Endothelial cell of umbilical vein (primary cell): ENCODE measurements at regions of chr7 and their contacts with region 1.

Region 1: DNA sequence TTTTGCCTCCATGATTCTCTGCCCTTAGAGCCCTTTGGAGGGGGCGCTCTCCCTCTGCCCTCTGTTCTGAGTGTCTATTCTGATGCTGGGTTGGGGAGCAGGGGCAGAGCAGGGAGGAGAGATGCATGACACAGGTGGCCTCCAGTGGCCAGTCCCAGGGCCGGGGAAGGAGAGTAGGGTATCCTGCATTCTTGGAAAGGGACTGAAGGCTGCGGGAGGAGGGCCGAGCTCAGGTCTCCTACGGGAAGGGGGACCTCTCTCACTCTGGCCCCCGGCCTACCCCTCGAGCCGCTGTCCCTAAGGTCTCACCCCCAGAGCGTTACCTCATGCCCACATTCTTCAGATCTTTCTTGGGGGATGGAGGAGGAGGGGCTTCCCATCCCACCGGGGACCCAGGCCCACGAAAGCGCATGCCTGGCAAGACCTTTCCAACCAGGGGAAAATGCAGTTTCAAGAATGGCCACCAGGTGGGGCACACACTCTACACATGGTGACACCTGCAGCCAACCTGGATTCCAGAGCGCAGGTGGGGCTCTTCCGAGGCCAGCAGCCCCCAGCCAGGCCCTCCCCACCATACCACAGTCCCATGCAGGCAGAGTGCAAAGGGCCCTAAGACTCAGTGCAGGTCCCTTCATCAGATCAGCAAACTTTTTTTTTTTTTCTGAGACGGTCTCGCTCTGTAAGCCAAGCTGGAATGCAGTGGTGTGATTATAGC is 86.4 kb downstream of the MYL10 start:
- DNase-seq: peak; percentile 48
- H3K4me3 ChIP-seq: no peak overlapping the region
- H3K27ac ChIP-seq: no peak overlapping the region
- H3K4me1 ChIP-seq: no peaks in the 10 kb centered on the region
- H3K27me3 ChIP-seq: no peaks in the 10 kb centered on the region
- CTCF ChIP-seq: peak; percentile 58 to 84
- POLR2A ChIP-seq: no peak

Region 2: GRCh38 chr7:101553018-101553770 is 10.5 kb after region 1 on chr7:
- CTCF ChIA-PET with region 1: interaction called, 13 read pairs
- POLR2A ChIA-PET with region 1: no interaction called
- dilution Hi-C with region 1: no loop called
- intact Hi-C with region 1: no loop called
- DNase-seq: no peak
- H3K4me3 ChIP-seq: no peak overlapping the region
- H3K27ac ChIP-seq: no peak overlapping the region
- H3K4me1 ChIP-seq: no peaks in the 10 kb centered on the region
- H3K27me3 ChIP-seq: no peaks in the 10 kb centered on the region
- CTCF ChIP-seq: no peak
- POLR2A ChIP-seq: no peak

Region 3: GRCh38 chr7:101882595-101883564 is 340.2 kb after region 1 on chr7:
- CTCF ChIA-PET with region 1: no interaction called
- POLR2A ChIA-PET with region 1: no interaction called
- dilution Hi-C with region 1: no loop called
- intact Hi-C with region 1: no loop called
- DNase-seq: peak; percentile 98
- H3K4me3 ChIP-seq: peak overlapping the region in 1 of 3 experiments; percentile 1
- H3K27ac ChIP-seq: peak overlapping the region; percentile 93
- H3K4me1 ChIP-seq: peaks cover 35% of the 10 kb centered on the region
- H3K27me3 ChIP-seq: no peaks in the 10 kb centered on the region
- CTCF ChIP-seq: no peak
- POLR2A ChIP-seq: no peak

Region 4: GRCh38 chr7:102122026-102122425 is 579.3 kb after region 1 on chr7:
- CTCF ChIA-PET with region 1: no interaction called
- POLR2A ChIA-PET with region 1: no interaction called
- dilution Hi-C with region 1: no loop called
- intact Hi-C with region 1: no loop called
- DNase-seq: peak; percentile 46
- H3K4me3 ChIP-seq: no peak overlapping the region
- H3K27ac ChIP-seq: peak overlapping the region; percentile 9
- H3K4me1 ChIP-seq: peaks cover 11% of the 10 kb centered on the region
- H3K27me3 ChIP-seq: no peaks in the 10 kb centered on the region
- CTCF ChIP-seq: no peak
- POLR2A ChIP-seq: no peak

Region 5: DNA sequence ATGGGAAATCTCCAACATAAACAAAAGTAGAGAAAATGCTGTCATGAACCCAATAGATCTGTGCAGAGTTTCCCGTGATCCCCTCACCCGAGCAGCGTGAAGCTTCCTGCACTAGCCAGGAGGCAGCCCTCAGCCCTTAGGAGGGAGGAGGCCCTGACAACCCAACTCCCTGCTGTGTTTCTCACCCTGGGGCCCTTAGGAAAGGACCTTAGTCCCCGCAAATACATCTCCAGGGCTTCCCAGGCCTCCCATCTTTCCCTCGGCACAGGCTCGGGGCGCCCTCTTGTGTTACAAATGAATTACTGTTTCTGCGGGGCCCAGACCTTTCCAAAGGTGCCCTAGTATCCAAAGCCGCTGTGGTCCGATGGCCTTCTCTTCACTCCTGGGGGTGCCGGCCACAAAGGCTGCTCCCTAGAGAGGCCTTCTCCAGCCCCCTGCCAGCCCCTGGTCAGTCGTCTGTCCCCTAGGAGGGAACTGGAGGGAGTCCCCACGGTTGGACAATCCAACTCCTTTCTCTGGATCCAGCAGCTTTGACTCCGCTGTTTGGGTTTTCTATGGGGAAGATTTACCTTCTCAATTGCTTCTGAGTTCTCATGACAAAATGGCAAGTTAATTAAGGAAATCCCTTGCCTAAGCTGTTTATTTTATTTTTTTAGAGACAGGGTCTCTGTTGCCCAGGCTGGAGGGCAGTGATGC is 694.1 kb after region 1 on chr7:
- CTCF ChIA-PET with region 1: interaction called, 21 read pairs
- POLR2A ChIA-PET with region 1: no interaction called
- dilution Hi-C with region 1: no loop called
- intact Hi-C with region 1: loop called (anchors 1 kb)
- DNase-seq: peak; percentile 57
- H3K4me3 ChIP-seq: no peak overlapping the region
- H3K27ac ChIP-seq: no peak overlapping the region
- H3K4me1 ChIP-seq: no peaks in the 10 kb centered on the region
- H3K27me3 ChIP-seq: no peaks in the 10 kb centered on the region
- CTCF ChIP-seq: peak; percentile 69 to 79
- POLR2A ChIP-seq: no peak

Region 6: DNA sequence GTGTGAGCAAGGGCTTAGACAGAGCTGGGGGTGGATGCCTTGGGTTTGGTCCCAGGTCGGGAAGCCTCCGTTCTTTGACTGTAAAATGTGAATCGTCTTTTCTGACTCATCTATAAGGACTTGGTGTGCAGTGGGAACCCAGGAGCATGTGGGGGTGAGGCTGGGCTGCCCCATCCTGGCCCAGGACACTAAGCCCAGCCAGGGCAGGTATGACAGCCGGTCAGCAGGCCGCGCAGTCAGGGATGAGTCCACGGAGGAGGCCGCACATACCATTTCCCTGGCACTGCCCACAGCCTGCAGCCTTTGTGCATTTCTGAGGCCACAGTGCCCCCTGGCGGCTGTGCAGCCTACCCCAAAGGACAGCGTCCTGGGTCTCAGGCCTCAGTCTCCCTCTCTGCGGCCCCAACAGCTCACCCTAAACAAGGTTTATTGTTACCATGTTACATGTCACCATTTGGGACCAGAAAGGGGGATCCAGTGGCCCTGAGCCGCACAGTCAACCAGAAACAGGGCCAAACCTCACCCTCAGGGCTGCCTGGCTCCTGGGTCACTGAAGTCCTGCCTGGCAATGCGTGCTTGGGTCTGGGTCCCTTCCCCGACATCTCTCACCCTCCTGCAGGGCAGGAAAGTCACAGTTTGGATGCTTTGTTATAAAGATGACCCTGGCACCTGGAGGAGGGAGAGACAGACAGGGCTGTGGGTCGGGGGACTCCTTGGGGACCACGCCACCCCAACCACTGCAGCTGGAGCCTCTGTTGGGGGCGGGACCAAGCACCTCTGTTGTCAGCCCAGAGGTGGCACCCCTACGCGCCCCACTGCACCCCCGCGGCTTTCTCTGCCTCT is 729.6 kb after region 1 on chr7:
- CTCF ChIA-PET with region 1: interaction called, 140 read pairs
- POLR2A ChIA-PET with region 1: no interaction called
- dilution Hi-C with region 1: no loop called
- intact Hi-C with region 1: loop called (anchors 1 kb)
- DNase-seq: peak; percentile 56
- H3K4me3 ChIP-seq: no peak overlapping the region
- H3K27ac ChIP-seq: no peak overlapping the region
- H3K4me1 ChIP-seq: no peaks in the 10 kb centered on the region
- H3K27me3 ChIP-seq: no peaks in the 10 kb centered on the region
- CTCF ChIP-seq: peak; percentile 89 to 92
- POLR2A ChIP-seq: no peak

Region 7: DNA sequence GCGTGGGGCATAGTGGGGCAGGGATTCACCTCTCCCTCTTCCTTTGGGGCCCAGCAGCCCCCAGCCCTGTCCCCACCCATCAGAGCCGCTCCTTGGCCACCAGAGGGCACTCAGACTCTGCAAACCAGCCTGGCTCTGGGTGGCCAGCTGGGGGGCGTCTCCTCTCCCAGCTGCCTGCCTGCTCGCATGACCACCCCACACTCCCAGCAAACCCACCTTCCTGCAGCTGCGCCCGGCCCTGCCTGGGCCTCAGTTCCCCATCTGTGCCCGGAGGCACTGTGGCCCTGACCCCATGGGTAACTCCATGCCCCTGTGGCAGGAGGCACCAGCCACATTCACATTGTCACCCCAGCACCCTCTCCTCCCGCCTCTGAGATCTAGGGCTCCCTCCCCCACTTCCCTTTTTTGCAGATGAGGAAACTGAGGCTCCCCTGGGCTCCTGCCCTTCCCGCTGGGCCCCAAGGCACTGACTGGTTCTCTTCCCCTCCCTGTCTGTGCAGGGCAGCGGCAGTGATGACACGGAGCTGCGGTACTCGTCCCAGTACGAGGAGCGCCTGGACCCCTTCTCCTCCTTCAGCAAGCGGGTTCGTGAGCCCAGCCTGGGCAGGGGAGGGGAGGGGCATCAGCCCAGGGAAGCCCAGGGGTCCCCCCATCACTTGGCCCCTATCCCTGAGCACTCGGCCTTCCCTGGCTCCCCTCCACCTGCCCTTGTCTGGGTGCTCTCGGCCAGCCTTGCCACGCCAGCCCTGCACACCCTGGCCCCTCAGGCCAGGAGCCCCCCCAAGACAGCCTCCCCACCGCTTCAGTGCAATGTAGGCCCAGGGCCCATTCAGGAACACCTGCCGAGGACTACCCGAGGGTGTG is 737.1 kb after region 1 on chr7:
- CTCF ChIA-PET with region 1: interaction called, 140 read pairs
- POLR2A ChIA-PET with region 1: no interaction called
- dilution Hi-C with region 1: no loop called
- intact Hi-C with region 1: no loop called
- DNase-seq: peak; percentile 47
- H3K4me3 ChIP-seq: no peak overlapping the region
- H3K27ac ChIP-seq: no peak overlapping the region
- H3K4me1 ChIP-seq: no peaks in the 10 kb centered on the region
- H3K27me3 ChIP-seq: peaks cover 0 to 2% of the 10 kb centered on the region in 2 experiments
- CTCF ChIP-seq: peak; percentile 75 to 93
- POLR2A ChIP-seq: no peak